ENCODE measurements at regions of chr5 and their contacts with region 1.

Region 1: DNA sequence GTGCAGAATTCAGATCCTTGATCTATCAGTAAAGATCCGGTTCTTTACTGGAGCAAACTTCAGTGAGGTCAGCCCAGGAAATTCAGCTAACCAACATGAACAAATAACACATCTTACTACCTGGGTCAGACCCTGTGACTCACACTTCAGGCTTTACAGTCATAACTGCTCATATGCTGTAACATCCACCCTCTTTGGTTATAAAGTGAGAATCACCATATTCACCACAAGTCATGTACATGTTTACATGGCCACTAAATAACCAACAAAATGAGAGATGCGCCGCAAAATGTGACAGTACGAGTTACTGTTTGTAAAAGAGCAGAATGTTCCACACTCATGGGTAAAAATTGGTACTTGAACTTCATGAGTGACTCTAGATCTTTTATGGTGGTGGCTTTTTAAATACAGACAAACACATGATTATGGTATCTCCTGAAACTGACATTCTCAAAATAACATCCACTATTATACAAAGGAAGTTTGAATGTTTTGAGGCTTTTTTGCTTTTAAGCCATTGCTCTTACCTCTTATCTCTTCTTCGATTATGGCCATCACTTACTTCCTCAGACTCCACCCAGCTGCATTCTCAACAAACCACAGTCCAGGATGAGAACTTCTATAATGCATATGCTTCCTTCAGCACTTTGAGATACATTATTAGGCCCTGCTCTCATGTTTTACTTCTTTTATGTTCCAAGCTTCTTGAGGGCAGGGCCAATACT is 516.6 kb downstream of the RAB3C start:
- DNase-seq: peak in 10 of 14 experiments; percentile 2 to 86 (median 20)
- ATAC-seq: peak; percentile 90
- H3K4me3 ChIP-seq: no peak overlapping the region
- H3K4me3 Mint-ChIP-seq: no peak overlapping the region
- H3K27ac ChIP-seq: peak overlapping the region in 1 of 2 donors; percentile 51
- H3K27ac Mint-ChIP-seq: peak overlapping the region; percentile 37
- H3K4me1 ChIP-seq: peaks cover 13% of the 10 kb centered on the region
- H3K4me1 Mint-ChIP-seq: peaks cover 35% of the 10 kb centered on the region
- H3K27me3 ChIP-seq: no peaks in the 10 kb centered on the region
- H3K27me3 Mint-ChIP-seq: no peaks in the 10 kb centered on the region
- CTCF ChIP-seq: no peak

Region 2: DNA sequence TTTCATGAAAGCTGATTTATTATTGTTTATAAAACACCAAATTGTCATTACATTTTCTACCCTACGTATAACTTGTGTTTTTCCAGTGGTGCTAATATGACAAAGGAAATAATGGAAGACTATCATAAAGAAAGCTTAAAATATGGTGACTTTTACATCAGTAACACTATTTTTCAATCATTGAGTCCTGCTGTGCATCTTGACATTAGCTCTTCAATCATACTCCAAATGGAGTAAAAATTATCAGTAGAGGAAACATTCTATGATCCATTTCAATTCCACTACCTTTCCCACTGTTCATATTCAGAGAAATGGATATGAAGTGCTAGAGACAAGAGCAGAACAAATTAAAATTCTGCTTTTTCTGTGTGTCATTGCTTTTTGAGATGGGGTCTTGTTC is 20.0 kb after region 1 on chr5:
- CTCF ChIA-PET with region 1: no interaction called
- POLR2A ChIA-PET with region 1: interaction called, 6 read pairs
- intact Hi-C with region 1: loop called in 1 of 2 experiments (anchors 2 kb)
- DNase-seq: no peak
- ATAC-seq: no peak
- H3K4me3 ChIP-seq: no peak overlapping the region
- H3K4me3 Mint-ChIP-seq: no peak overlapping the region
- H3K27ac ChIP-seq: no peak overlapping the region
- H3K27ac Mint-ChIP-seq: no peak overlapping the region
- H3K4me1 ChIP-seq: peaks cover 6% of the 10 kb centered on the region
- H3K4me1 Mint-ChIP-seq: no peaks in the 10 kb centered on the region
- H3K27me3 ChIP-seq: no peaks in the 10 kb centered on the region
- H3K27me3 Mint-ChIP-seq: no peaks in the 10 kb centered on the region
- CTCF ChIP-seq: no peak